ENCODE measurements at regions of chr15 and their contacts with region 1.

Region 1: DNA sequence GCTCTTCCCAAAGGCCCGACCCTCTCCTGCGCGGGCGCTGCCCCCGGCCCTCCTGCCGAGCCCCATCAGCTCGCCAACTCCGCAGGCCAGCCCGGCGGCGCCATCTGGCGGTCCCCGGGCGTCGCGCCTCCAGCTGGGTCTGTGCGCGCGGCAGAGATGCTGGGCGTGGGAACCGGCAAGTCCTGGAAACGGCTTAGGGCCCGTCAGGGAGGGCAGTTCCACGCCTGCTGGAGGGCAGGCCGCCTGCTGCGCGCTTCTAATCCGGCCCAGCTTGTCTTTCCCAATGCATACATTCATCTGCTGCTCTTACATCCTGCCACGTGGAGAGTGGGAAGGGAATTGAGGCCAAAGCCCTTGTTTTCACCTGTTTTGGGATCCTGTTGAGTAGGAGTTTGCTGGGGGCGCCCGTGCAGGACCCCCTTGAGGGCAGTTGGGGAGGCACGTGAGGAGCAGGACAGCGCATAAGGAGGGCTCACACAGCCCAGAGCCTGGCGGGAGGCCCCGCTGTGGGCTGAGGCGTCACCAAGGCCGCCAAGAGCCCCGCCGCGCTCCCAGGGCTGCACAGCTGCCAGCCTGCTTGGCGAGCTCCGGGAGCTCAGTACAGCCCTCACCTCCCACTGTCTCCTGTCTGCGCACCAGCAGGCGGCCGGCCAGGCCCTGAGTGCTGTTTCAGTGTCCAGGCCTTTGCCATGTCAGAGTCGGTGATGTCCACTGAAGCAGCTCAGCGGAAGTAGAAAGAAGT is 165.6 kb downstream of the NSMCE3 start:
- DNase-seq: peak; percentile 88
- ATAC-seq: peak; percentile 78
- H3K4me3 Mint-ChIP-seq: peak overlapping the region; percentile 31
- H3K27ac Mint-ChIP-seq: no peak overlapping the region
- H3K4me1 Mint-ChIP-seq: peaks cover 31% of the 10 kb centered on the region
- H3K27me3 Mint-ChIP-seq: no peaks in the 10 kb centered on the region
- CTCF ChIP-seq: peak; percentile 67

Region 2: DNA sequence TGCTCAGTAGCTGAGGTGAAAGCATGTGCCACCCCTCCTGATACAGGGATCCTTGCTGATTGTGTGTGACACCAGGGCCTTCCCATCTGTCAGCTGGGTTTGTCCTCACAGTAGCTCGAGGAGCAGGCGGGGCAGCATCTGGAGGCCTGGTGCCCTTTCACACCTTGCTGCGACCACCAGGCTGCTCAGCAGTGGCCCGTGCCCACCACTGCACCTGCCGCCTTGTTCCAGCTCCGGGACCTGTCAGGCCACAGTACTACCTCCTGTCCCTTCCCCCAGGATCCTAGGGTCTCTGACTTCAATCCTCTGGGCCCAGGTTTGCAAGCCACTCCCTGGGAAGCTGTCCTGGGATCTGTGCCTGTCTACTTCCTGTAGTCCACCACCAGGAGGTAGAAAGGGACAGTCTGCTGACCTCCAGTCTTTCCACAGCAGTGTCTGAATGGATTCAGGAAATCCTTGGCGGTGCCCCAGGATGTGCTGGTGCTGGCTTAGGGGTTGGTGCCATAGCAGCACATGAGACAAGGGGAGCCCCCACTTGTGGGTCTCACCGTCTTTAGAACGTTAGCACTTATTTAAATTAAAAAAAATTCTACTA is 190.7 kb before region 1 on chr15:
- CTCF ChIA-PET with region 1: interaction called, 44 read pairs
- POLR2A ChIA-PET with region 1: no interaction called
- DNase-seq: no peak
- ATAC-seq: peak; percentile 18
- H3K4me3 Mint-ChIP-seq: no peak overlapping the region
- H3K27ac Mint-ChIP-seq: no peak overlapping the region
- H3K4me1 Mint-ChIP-seq: peaks cover 32% of the 10 kb centered on the region
- H3K27me3 Mint-ChIP-seq: no peaks in the 10 kb centered on the region
- CTCF ChIP-seq: no peak

Region 3: DNA sequence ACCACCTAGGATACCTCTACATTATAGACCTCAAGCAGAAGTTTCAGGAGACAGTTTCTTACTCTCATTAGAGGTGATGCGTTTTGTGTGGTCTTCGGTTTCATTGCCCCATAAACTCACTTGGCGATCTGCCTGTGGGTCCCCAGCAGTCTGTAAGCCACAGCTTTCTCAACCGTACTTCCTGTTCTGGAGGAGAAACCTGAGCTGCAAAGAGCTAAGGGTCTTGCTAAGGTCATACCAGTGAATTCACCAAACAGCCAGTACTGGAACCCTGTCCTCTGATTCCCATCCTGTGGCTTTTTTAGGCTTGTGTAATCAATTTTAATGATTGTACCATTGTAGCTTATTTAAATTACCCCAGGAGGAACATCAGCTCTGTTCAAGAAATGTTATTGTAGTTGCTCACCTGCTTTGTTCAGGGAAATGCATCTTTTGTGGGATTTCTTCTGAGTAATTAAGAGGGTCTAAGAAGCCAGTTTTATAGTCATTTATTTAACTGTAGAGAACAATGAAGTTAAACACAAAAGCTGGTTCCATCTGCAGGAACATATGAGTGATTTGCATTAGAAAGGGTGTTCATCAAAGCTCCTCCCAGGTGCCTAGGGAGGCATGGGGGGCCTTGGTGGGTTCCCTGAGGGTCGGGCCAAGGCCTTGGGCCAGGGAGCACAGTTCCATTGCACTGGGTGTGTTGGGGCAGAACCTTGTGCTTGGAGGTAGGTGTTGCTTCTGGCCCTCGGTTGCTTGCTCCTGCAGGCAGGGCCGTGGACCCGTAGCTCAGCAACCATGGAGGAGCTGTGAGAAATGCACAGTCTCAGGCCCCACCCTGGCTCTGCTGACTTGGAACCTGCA is 148.6 kb before region 1 on chr15:
- CTCF ChIA-PET with region 1: interaction called, 11 read pairs
- POLR2A ChIA-PET with region 1: interaction called, 5 read pairs
- DNase-seq: no peak
- ATAC-seq: 0 out of 2 replicates have a peak, but pooled peaks have one; percentile 43
- H3K4me3 Mint-ChIP-seq: no peak overlapping the region
- H3K27ac Mint-ChIP-seq: no peak overlapping the region
- H3K4me1 Mint-ChIP-seq: peaks cover 28% of the 10 kb centered on the region
- H3K27me3 Mint-ChIP-seq: no peaks in the 10 kb centered on the region
- CTCF ChIP-seq: no peak

Region 4: GRCh38 chr15:29018120-29018805 is 85.7 kb before region 1 on chr15:
- CTCF ChIA-PET with region 1: interaction called, 17 read pairs
- POLR2A ChIA-PET with region 1: no interaction called
- DNase-seq: peak; percentile 68
- ATAC-seq: peak; percentile 99
- H3K4me3 Mint-ChIP-seq: no peak overlapping the region
- H3K27ac Mint-ChIP-seq: peak overlapping the region; percentile 12; the same call in 1 of the 2 replicates
- H3K4me1 Mint-ChIP-seq: peaks cover 22% of the 10 kb centered on the region
- H3K27me3 Mint-ChIP-seq: no peaks in the 10 kb centered on the region
- CTCF ChIP-seq: no peak

Region 5: DNA sequence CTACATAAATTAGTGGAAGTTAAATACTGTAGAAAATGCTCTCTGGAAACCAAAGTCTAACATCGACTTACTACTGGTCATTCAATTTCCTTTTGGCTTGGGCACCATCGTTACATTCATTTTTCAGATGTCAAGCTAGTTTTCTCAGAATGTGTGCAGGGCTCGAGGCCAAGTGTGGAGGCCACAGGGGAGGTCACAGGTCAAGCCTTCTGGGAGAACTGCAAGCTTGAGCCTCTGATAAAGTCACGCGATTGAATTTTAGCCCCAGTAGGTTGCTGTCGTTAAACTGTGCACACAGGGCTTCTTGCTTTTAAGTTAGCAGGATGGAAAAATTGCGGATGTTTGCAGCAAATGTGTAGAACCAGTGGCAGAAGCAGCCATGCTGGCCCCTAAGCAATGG is 36.0 kb before region 1 on chr15:
- CTCF ChIA-PET with region 1: no interaction called
- POLR2A ChIA-PET with region 1: no interaction called
- DNase-seq: no peak
- ATAC-seq: no peak
- H3K4me3 Mint-ChIP-seq: no peak overlapping the region
- H3K27ac Mint-ChIP-seq: no peak overlapping the region
- H3K4me1 Mint-ChIP-seq: peaks cover 8% of the 10 kb centered on the region
- H3K27me3 Mint-ChIP-seq: no peaks in the 10 kb centered on the region
- CTCF ChIP-seq: no peak

Region 6: DNA sequence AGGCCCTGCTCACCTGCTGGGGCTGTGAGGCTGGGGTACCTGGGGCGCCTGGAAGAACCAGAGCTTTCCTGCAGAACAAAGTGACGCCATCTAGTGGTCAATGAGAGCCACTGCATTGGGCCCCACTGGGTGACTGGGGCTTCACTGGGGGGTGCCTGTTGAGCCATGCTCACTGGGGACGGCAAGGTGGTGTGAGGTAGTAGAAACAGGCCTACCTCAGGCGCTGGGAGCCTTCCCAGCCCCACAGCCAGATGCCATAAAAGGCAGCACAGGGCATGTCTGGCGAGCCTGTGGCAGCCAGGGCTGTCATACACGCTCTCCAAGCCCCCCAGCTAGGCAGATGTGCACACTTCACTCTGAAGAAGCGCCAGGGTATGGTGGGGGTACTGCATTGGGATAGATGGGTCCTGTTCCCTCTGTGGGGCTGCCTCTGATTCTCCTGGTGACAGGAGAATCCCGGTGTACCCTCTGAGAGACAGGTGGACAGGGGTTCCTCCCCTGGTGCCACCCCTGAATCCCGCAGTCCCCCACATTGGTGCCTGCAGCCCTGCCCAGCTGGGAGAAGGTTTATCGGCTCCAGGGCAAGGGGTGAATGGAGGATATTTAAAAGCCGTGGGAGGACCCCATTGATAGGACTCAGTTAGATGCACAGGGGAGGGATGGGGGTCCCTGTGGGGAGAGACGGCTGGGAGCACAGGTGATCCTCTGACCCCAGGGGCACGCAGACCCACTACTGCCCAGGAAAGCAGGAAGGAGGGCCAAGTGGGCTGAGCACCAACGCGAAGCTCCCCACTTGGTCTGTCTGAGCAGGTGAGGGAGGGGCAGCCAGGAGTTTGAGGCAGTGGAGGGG is 13.2 kb before region 1 on chr15:
- CTCF ChIA-PET with region 1: interaction called, 153 read pairs
- POLR2A ChIA-PET with region 1: no interaction called
- DNase-seq: peak; percentile 77
- ATAC-seq: peak; percentile 82
- H3K4me3 Mint-ChIP-seq: no peak overlapping the region
- H3K27ac Mint-ChIP-seq: no peak overlapping the region
- H3K4me1 Mint-ChIP-seq: peaks cover 7% of the 10 kb centered on the region
- H3K27me3 Mint-ChIP-seq: no peaks in the 10 kb centered on the region
- CTCF ChIP-seq: peak; percentile 99

Region 7: GRCh38 chr15:29131840-29132420 is 27.9 kb after region 1 on chr15:
- CTCF ChIA-PET with region 1: interaction called, 38 read pairs
- POLR2A ChIA-PET with region 1: no interaction called
- DNase-seq: no peak
- ATAC-seq: no peak
- H3K4me3 Mint-ChIP-seq: no peak overlapping the region
- H3K27ac Mint-ChIP-seq: no peak overlapping the region; the same call in 1 of the 2 replicates
- H3K4me1 Mint-ChIP-seq: peaks cover 21% of the 10 kb centered on the region
- H3K27me3 Mint-ChIP-seq: no peaks in the 10 kb centered on the region; the same call in 1 of the 2 replicates
- CTCF ChIP-seq: no peak

Region 8: GRCh38 chr15:29558261-29558660 is 454.3 kb after region 1 on chr15:
- CTCF ChIA-PET with region 1: no interaction called
- POLR2A ChIA-PET with region 1: no interaction called
- DNase-seq: no peak
- ATAC-seq: no peak
- H3K4me3 Mint-ChIP-seq: no peak overlapping the region
- H3K27ac Mint-ChIP-seq: no peak overlapping the region
- H3K4me1 Mint-ChIP-seq: peaks cover 12% of the 10 kb centered on the region
- H3K27me3 Mint-ChIP-seq: no peaks in the 10 kb centered on the region
- CTCF ChIP-seq: no peak

Measured in WTC11 (cell line).